Activated CD4-positive, alpha-beta T cell treated with anti-CD3 and anti-CD28 coated beads, Interleukin-2, amount 10 ng/mL, durations not matched to agents 7 days and 5 days (primary cell): ENCODE measurements at regions of chr12 and their contacts with region 1.

Region 1: GRCh38 chr12:6423267-6424007 is 21.3 kb upstream of the CD27 start:
- DNase-seq: peak; percentile 87
- H3K4me3 Mint-ChIP-seq: no peak overlapping the region
- H3K27ac Mint-ChIP-seq: peak overlapping the region; percentile 26
- H3K4me1 Mint-ChIP-seq: peaks cover 47% of the 10 kb centered on the region
- H3K27me3 Mint-ChIP-seq: peaks cover 2% of the 10 kb centered on the region

Region 2: DNA sequence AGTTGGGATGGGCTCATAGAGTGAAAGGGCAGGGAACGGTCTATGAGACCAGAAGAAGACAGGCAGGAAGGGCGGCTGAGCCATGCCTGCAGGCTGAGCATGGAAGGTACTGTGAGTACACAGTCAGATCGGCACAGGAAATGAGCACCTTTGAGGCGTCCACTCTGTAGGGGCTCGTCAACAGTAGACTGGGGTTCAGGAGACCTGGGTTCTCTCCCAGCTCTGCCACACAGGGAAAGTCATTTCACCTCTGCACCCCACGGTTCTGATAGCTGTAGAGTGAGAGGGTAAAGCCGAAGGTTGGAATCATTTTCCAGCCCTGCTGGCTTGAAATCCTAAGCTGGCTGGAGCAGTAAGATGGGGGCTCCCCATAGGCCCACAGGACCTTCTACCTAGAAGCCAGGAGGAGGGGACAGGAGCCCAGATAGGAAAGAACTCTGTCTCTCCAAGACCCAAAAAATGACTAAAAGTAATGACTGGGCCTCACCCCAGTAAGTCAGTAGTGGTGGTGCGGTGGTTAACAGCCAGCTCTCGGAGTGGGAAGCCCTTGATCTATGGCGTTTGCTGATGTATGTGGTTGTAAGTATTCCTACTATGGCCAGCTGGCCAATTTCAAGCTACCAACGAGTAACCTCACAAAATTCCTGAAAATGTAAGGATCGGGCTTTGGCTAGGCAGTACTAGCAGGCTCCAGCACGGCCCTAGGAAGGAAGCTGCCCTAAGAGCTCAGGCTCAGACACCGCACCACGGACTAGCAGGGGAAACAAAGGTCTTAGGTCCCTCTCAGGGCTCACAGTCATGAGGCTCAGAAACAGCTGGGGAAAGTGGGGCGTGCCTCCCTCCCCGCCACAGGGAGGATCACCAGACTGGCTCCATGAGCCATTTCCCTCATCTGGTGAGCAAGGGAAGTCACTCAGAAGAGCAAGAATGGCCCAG is 11.0 kb after region 1 on chr12:
- CTCF ChIA-PET with region 1: interaction called, 13 read pairs
- POLR2A ChIA-PET with region 1: no interaction called
- DNase-seq: peak; percentile 56
- H3K4me3 Mint-ChIP-seq: no peak overlapping the region
- H3K27ac Mint-ChIP-seq: peak overlapping the region; percentile 93
- H3K4me1 Mint-ChIP-seq: peaks cover 52% of the 10 kb centered on the region
- H3K27me3 Mint-ChIP-seq: no peaks in the 10 kb centered on the region

Region 3: GRCh38 chr12:6443361-6443983 is 20.0 kb after region 1 on chr12:
- CTCF ChIA-PET with region 1: interaction called, 21 read pairs
- POLR2A ChIA-PET with region 1: no interaction called
- DNase-seq: no peak
- H3K4me3 Mint-ChIP-seq: peak overlapping the region; percentile 90
- H3K27ac Mint-ChIP-seq: peak overlapping the region; percentile 89
- H3K4me1 Mint-ChIP-seq: peaks cover 54% of the 10 kb centered on the region
- H3K27me3 Mint-ChIP-seq: no peaks in the 10 kb centered on the region

Region 4: GRCh38 chr12:6451348-6452244 is 28.2 kb after region 1 on chr12 and contains the start of gene TAPBPL:
- CTCF ChIA-PET with region 1: interaction called, 12 read pairs
- POLR2A ChIA-PET with region 1: no interaction called
- DNase-seq: peak; percentile 88
- H3K4me3 Mint-ChIP-seq: peak within 1 kb of the TSS; percentile 100
- H3K27ac Mint-ChIP-seq: peak within 1 kb of the TSS; percentile 98
- H3K4me1 Mint-ChIP-seq: peaks cover 71% of the 10 kb centered on the region
- H3K27me3 Mint-ChIP-seq: no peaks in the 10 kb centered on the region
- total RNA-seq, gene TAPBPL: 45.8 to 47.9 TPM

Region 5: DNA sequence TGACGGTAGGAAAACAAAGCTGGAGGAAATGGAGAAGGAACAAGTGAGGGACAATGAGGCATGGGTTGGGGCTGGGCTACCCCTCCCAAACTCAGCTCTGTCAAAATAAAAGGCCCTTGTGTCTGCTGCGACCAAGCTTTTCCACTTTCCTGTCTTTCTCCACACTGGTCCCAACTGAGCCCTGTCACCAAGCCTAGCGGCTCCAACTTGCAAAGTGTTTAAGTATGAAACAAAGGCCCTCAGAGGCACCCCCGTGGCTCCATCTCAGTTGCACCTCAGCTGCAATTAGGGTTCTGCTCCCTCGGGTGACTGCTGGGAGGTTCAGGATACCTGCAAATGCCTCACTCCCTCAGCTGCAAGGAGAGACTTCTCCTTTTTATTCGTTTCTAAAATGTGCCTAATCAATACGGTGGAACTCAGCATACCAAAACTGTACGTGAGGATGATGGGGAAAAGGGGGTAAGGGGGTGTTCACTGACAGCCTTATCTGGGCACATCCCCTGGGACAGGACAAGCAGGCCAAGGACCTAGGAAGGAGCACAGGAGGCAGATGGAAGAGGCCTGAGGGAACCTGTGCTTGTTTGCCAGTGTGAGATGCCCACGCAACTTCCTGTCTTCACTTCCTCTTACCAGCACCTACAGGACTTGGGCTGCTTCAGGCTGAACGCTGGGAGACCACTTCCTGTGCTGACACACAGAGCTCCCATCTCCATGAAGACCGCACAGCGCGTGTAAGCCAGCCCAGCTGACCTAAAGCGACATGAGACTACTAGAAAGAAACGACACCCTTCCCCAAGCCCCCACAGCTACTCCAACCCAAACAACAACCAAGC is 38.2 kb after region 1 on chr12:
- CTCF ChIA-PET with region 1: interaction called, 18 read pairs
- POLR2A ChIA-PET with region 1: interaction called, 10 read pairs
- DNase-seq: peak; percentile 91
- H3K4me3 Mint-ChIP-seq: peak overlapping the region; percentile 76
- H3K27ac Mint-ChIP-seq: peak overlapping the region; percentile 96
- H3K4me1 Mint-ChIP-seq: peaks cover 85% of the 10 kb centered on the region
- H3K27me3 Mint-ChIP-seq: no peaks in the 10 kb centered on the region

Region 6: DNA sequence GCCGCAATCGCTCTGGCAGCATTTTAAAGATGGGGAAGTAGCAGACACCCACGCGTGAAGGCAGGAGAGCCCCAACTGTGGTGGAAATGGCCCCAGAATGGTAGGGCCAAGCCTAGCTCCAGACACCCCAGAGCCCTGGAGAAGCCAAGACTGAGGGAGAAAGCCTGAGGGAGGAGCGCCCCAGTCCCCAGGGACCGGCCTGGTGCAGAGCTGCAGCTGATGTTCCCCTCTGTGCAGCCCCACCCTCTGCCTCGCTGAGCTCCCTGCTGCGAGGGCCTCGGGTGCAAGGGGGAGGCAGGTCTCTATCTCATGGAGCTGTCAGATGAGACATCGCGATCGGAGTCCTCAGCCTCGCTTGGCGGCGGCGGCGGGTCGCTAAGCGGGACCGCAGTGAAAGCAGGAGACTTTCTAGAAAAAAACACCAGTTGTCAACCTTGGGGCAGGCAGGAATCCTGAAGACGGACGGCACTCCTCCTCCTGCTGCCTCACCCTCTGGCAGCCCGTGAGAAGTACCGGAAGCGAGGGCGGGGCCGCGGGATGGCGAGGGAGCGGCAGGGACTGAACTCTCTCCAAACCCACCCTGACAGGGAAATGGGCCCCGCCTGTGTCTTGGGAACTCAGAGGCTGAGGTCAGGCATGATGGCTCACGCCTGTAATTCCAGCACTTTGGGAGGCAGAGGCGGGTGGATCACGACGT is 116.9 kb after region 1 on chr12:
- CTCF ChIA-PET with region 1: interaction called, 16 read pairs
- POLR2A ChIA-PET with region 1: interaction called, 3 read pairs
- DNase-seq: peak; percentile 63
- H3K4me3 Mint-ChIP-seq: peak overlapping the region; percentile 60
- H3K27ac Mint-ChIP-seq: peak overlapping the region; percentile 83
- H3K4me1 Mint-ChIP-seq: peaks cover 68% of the 10 kb centered on the region
- H3K27me3 Mint-ChIP-seq: no peaks in the 10 kb centered on the region